Activated naive CD4-positive, alpha-beta T cell treated with anti-CD3 and anti-CD28 coated beads for 36 hours (primary cell): ENCODE measurements at regions of chr6 and their contacts with region 1.

Region 1: DNA sequence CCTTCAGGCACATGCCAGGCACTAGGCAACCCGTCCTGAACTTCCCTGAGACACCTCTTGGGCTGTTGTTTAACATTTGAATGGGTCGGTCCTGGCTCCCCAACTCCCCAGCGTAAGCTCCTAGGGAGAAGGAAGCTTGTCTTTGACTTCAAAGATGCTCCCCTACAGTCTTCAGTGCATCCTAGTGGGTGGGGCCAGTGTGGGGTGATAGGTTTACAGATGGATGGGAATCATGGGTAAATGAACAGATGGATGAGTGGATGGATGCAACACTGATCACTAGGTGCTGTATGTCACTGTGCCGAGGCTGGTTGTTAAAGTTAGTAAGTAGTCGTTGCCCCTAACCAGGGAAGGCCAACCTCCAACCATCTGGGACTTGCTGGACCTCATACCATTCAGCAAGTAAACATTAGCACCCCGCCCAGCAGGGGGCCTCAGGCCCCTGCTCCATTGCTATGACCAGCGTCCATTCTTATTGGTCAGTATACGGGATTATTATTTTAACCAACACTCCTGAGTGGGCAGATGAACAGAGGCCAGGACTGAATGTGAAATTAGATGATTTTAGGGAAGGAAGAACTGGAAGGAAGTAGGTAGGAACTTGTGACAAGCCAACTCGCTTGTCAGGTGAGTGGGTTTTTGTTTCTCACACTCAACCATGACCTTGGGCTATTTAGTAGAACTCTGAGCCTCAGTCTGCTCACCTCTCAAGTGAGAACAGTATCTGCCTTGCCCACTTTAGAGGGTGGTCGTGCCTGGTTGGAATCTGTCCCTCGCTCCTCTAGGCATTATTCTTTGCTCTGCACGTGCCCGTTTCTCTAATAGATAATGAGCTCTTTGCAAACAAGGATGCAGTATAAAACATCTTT is 82.9 kb upstream of the FOXP4 start:
- DNase-seq: peak; percentile 53
- H3K4me3 Mint-ChIP-seq: no peak overlapping the region
- H3K27ac Mint-ChIP-seq: no peak overlapping the region
- H3K4me1 Mint-ChIP-seq: no peaks in the 10 kb centered on the region
- H3K27me3 Mint-ChIP-seq: peaks cover 34% of the 10 kb centered on the region

Region 2: DNA sequence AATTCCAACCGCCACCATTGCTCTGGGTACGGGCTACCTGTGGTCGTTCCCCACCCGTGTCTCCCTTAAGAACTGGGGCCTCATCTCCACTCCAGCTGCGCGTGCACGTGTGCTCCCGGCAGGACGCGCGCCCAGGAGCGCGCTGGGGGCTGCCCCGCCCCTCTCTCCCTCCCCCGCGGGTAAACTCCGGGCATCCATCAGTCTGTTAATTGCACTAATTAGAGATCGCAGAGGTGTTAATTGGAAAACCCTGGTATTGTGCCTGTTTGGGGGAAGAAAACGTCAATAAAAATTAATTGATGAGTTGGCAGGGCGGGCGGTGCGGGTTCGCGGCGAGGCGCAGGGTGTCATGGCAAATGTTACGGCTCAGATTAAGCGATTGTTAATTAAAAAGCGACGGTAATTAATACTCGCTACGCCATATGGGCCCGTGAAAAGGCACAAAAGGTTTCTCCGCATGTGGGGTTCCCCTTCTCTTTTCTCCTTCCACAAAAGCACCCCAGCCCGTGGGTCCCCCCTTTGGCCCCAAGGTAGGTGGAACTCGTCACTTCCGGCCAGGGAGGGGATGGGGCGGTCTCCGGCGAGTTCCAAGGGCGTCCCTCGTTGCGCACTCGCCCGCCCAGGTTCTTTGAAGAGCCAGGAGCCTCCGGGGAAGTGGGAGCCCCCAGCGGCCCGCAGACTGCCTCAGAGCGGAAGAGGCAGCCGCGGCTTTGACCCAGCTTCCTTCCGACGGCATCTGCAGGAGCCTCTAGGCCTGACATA is 97.3 kb after region 1 on chr6:
- CTCF ChIA-PET with region 1: no interaction called
- intact Hi-C with region 1: loop called (anchors 1 kb)
- DNase-seq: peak; percentile 94
- H3K4me3 Mint-ChIP-seq: peak overlapping the region; percentile 83
- H3K27ac Mint-ChIP-seq: peak overlapping the region; percentile 83
- H3K4me1 Mint-ChIP-seq: peaks cover 26% of the 10 kb centered on the region
- H3K27me3 Mint-ChIP-seq: no peaks in the 10 kb centered on the region

Region 3: GRCh38 chr6:41591859-41592502 is 128.7 kb after region 1 on chr6:
- CTCF ChIA-PET with region 1: interaction called, 6 read pairs
- intact Hi-C with region 1: loop called (anchors 1 kb)
- DNase-seq: peak; percentile 89
- H3K4me3 Mint-ChIP-seq: no peak overlapping the region
- H3K27ac Mint-ChIP-seq: no peak overlapping the region
- H3K4me1 Mint-ChIP-seq: no peaks in the 10 kb centered on the region
- H3K27me3 Mint-ChIP-seq: no peaks in the 10 kb centered on the region